Dorsolateral prefrontal cortex (tissue), 120 donors: ENCODE measurements at regions of chr1 and their contacts with region 1.

Region 1: GRCh38 chr1:160251687-160252526 is 10.4 kb downstream of the DCAF8 start:
- DNase-seq: peak; percentile 40 to 91 (median 81)
- H3K4me3 ChIP-seq: peak overlapping the region in 7 of 59 donors; percentile 0 to 21 (median 2)
- H3K27ac ChIP-seq: peak overlapping the region; percentile 54 to 98 (median 88)
- H3K27me3 ChIP-seq: no peaks in the 10 kb centered on the region
- CTCF ChIP-seq: peak; percentile 71 to 99 (median 86)

Region 2: GRCh38 chr1:159936273-159936904 is 315.5 kb before region 1 on chr1:
- intact Hi-C with region 1: loop called in 1 of 2 experiments (anchors 10 kb)
- DNase-seq: peak in 5 of 10 donors; percentile 45 to 78 (median 55)
- H3K4me3 ChIP-seq: no peak overlapping the region
- H3K27ac ChIP-seq: no peak overlapping the region
- H3K27me3 ChIP-seq: peaks cover 0 to 18% (median 0%) of the 10 kb centered on the region in 45 donors
- CTCF ChIP-seq: peak; percentile 78 to 100 (median 97)

Region 3: DNA sequence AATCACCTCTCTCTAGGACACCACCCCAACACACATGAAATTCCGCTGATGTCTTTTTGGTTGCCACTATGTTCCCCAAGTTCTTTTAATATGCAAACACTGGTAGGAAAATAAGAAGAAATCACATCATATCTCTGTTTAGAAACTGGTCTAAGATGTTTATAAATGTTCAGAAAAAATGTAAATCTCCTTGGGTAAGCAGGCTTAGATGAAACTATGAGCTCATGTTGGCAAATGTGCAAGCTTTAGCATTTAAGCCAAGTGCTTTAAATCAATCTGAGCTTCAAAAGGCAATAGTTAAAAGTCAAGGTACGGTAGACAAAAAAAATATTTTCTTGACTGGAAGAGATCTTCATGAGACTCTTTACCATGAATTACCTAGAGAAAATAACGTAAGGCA is 272.6 kb before region 1 on chr1:
- intact Hi-C with region 1: no loop called
- DNase-seq: no peak
- H3K4me3 ChIP-seq: no peak overlapping the region
- H3K27ac ChIP-seq: no peak overlapping the region
- H3K27me3 ChIP-seq: peaks cover 0 to 11% (median 0%) of the 10 kb centered on the region in 45 donors
- CTCF ChIP-seq: no peak

Region 4: DNA sequence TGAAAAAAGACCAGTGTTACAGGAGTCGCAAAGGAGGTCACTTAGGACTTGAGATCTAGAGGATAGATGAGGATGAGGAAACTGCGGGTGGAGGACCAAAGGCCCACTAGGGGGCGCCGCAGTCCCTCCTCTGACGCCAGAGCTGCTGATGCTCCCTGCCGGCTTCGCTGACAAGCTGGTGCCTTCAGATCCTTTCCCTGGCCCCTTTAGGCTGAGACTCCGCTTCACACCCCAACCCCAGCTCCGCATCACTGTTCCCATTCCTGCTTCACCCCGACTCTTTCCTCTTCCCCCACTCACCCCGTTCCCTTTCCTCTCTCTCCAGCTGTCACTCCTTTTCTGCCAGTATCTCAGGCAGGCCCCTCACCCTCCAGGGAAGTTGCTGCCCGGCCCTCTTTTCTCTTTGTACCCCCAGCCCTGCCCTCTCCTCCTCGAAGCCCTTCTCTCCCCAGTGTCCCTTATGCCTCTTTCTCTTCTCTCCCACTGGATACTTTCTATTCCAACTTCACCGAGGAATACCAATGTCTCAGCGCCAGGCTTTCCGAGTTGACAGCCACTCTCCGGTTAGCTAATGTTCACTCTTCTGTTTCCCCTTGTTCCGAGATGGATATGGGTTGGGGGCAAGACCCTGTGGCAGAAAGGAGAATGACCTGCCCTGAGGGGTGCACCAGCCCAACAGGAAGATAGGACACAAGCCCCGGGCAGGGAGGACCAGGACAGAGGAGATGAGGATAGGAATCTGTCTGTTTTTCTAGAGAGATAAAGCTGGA is 166.0 kb before region 1 on chr1:
- intact Hi-C with region 1: loop called in 1 of 2 experiments (anchors 5 kb)
- DNase-seq: peak; percentile 92 to 96 (median 95)
- H3K4me3 ChIP-seq: peak overlapping the region in 52 of 59 donors; percentile 6 to 79 (median 34)
- H3K27ac ChIP-seq: peak overlapping the region; percentile 75 to 100 (median 97)
- H3K27me3 ChIP-seq: no peaks in the 10 kb centered on the region
- CTCF ChIP-seq: peak; percentile 67 to 98 (median 94)

Region 5: DNA sequence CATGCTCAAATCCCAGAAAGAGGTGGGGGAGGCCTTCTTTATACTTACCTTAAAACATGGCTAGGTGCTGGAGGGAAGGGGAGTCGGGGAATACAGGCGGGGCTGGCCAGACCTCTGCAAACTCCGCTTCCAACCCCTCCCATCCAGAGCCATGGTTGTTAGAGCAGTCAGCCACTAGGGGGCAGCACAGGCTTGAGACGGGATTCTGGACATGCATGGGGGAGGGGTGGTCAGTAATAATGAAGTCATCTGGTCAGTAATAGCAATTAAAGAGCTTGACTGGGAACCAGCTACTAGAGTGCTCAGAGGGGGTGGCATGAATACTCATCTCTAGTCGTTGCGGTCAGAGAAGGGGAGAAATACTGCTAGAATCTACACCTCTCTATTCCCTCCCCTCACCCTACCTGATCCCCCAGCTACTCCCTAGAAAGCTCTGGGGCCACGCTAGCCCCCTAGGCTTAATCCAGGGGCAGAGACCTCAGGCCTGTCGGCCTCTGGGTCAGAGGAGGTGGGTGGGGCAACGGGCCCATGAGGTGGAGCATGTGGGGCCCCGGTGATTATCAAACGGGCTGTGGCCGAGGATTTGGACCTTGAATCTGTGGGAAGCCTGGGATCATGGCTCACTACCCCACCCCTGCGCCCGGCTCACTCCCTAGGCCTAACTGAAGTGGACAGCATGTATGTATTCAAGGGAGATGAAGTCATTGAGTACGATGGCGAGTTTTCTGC is 58.7 kb before region 1 on chr1:
- intact Hi-C with region 1: loop called (anchors 1 to 5 kb)
- DNase-seq: peak; percentile 71 to 93 (median 84)
- H3K4me3 ChIP-seq: peak overlapping the region in 57 of 59 donors; percentile 5 to 59 (median 42)
- H3K27ac ChIP-seq: peak overlapping the region in 45 of 59 donors; percentile 10 to 86 (median 65)
- H3K27me3 ChIP-seq: no peaks in the 10 kb centered on the region
- CTCF ChIP-seq: peak; percentile 93 to 99 (median 97)

Region 6: DNA sequence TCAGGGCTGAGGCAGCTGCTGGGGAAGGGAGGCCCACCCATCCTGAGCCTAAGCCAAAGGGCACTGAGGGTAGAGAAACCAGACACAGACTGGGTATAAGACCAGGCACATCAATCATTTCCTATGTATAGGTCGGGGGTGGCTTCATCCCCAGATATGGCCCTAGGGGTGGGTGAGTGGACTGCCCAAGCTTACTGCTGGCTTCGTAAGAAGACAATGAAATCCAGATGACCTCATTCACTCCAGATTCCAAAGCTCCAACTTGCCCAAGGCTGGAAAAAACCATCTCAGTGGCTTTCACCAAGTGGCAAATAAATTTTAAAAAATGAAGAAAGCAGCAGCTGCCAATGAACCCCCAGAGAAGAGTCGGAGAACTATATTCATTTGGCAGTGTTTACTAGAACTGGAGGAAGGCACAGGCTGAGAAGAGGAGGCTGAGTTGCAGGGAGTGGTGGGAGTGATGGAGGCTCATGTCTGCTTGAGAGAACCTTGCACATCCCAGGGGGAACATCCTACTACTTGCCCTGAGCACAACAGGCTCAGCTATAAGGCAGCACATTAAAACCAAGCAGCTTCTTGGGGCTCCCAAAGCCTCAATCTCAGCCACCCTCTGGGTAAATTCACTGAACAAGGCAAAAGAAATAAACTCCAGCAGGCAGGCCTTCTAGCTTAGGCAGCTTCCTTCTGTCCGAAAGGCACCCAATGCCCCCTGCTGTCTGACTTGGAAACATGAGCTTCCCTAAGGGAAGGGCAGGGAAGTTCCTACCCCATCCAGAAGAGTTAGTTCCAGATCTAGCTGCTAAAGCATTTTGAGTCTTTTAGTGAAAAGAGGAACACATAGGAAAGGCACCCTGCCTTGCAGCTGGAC is 32.6 kb before region 1 on chr1:
- intact Hi-C with region 1: loop called in 1 of 2 experiments (anchors 2 kb)
- DNase-seq: peak in 9 of 10 donors; percentile 47 to 80 (median 68)
- H3K4me3 ChIP-seq: no peak overlapping the region
- H3K27ac ChIP-seq: peak overlapping the region; percentile 42 to 98 (median 87)
- H3K27me3 ChIP-seq: no peaks in the 10 kb centered on the region
- CTCF ChIP-seq: peak; percentile 56 to 88 (median 78)